Panc1 (cell line): ENCODE measurements at regions of chr2 and their contacts with region 1.

Region 1: GRCh38 chr2:47653902-47654789 is 128.8 kb upstream of the MSH6 start:
- DNase-seq: no peak
- ATAC-seq: peak; percentile 78; the same call in 1 of the 2 replicates
- H3K4me3 ChIP-seq: no peak overlapping the region
- H3K27ac ChIP-seq: no peak overlapping the region
- H3K4me1 ChIP-seq: peaks cover 7% of the 10 kb centered on the region
- H3K27me3 ChIP-seq: no peaks in the 10 kb centered on the region; the same call in 1 of the 2 replicates
- CTCF ChIP-seq: peak; percentile 72

Region 2: GRCh38 chr2:47592381-47592780 is 61.8 kb before region 1 on chr2:
- CTCF ChIA-PET with region 1: interaction called, 11 read pairs
- POLR2A ChIA-PET with region 1: no interaction called
- in situ Hi-C with region 1: no loop called
- intact Hi-C with region 1: no loop called
- DNase-seq: no peak
- ATAC-seq: no peak
- H3K4me3 ChIP-seq: no peak overlapping the region
- H3K27ac ChIP-seq: no peak overlapping the region
- H3K4me1 ChIP-seq: no peaks in the 10 kb centered on the region
- H3K27me3 ChIP-seq: peaks cover 8% of the 10 kb centered on the region
- CTCF ChIP-seq: no peak

Region 3: DNA sequence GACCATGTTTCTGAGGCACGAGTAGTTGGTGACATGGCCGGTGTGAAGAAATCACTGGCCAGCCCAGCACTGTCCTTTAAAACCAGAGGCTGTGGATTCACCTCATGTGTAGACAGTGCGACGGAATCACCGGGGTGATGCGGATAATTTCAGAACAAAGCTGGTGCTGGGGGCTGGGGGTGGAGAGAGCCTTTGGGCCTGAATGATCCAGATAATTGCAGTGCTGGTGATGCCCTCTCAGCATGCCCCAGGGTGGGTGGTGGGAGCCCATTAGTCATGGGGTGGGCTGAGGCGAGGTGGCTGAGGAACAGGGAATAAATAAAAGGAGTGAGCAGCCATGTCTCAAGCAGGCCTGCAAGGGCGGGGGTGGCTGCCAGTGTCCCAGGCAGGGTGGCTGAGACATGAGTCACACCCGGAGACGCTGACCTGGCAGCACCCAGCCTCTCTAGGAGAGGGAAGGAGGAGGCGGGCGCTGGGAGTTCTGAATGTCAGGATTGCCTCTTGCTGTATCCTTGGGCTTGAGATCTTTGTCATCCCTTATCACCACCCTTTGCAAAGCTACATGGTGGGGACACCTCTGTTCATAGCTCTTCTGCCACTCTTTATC is 22.3 kb before region 1 on chr2:
- CTCF ChIA-PET with region 1: no interaction called
- POLR2A ChIA-PET with region 1: no interaction called
- in situ Hi-C with region 1: no loop called
- intact Hi-C with region 1: no loop called
- DNase-seq: no peak
- ATAC-seq: peak; percentile 98
- H3K4me3 ChIP-seq: no peak overlapping the region
- H3K27ac ChIP-seq: no peak overlapping the region
- H3K4me1 ChIP-seq: 0 out of 2 replicates have a peak, but pooled peaks cover 2% of the 10 kb centered on the region
- H3K27me3 ChIP-seq: no peaks in the 10 kb centered on the region
- CTCF ChIP-seq: no peak

Region 4: DNA sequence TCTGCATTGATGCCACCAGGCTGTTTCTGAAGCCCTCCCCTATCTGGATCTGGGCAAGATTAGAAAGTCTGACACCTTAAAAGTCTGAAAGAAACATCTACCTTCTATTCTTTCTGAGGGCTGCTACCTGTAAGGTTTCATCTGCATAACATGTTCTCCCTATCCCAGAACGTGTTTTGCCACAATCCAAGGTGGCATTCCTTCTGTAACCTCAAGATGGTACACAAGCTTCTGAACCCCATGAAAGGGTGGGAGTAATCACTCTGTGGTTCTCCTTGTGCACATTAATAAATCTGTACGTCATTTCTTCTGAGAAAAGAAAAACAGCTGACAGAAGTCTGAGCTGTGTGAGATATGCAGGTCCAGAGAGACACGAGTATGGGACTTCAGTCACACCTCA is 86.9 kb after region 1 on chr2:
- CTCF ChIA-PET with region 1: interaction called, 11 read pairs
- POLR2A ChIA-PET with region 1: no interaction called
- in situ Hi-C with region 1: no loop called
- intact Hi-C with region 1: no loop called
- DNase-seq: no peak
- ATAC-seq: no peak
- H3K4me3 ChIP-seq: no peak overlapping the region
- H3K27ac ChIP-seq: no peak overlapping the region
- H3K4me1 ChIP-seq: no peaks in the 10 kb centered on the region
- H3K27me3 ChIP-seq: peaks cover 4% of the 10 kb centered on the region
- CTCF ChIP-seq: no peak